Activated CD8-positive, alpha-beta T cell treated with anti-CD3 and anti-CD28 coated beads for 36 hours (primary cell): ENCODE measurements at regions of chr2 and their contacts with region 1.

Region 1: DNA sequence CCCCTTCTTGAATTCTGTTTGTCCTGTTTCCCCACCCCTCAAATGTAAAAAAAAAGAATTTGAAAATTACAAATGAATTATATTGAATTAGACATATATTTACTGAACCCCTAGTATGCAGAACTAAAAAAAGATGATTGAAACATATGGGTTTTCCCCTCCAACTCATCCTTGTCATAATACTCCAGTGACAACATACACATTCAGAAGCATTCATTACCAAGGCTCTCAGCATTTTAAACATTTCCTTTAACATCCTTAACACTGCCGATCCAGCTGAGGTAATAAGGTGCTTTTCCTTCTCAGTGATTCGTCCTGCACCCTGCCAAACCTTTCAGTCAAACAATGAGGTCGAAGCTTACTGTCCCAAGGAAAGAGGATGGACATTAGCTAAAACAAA is 53.1 kb upstream of the DTNB start:
- DNase-seq: no peak
- ATAC-seq: no peak
- H3K4me3 Mint-ChIP-seq: no peak overlapping the region
- H3K27ac Mint-ChIP-seq: no peak overlapping the region
- H3K4me1 Mint-ChIP-seq: peaks cover 2% of the 10 kb centered on the region
- H3K27me3 Mint-ChIP-seq: peaks cover 2% of the 10 kb centered on the region
- CTCF ChIP-seq: no peak

Region 2: GRCh38 chr2:25674077-25674362 is 52.5 kb before region 1 on chr2:
- CTCF ChIA-PET with region 1: no interaction called
- POLR2A ChIA-PET with region 1: no interaction called
- intact Hi-C with region 1: loop called (anchors 2 kb)
- DNase-seq: no peak
- ATAC-seq: no peak
- H3K4me3 Mint-ChIP-seq: peak overlapping the region; percentile 75
- H3K27ac Mint-ChIP-seq: peak overlapping the region; percentile 49
- H3K4me1 Mint-ChIP-seq: peaks cover 23% of the 10 kb centered on the region
- H3K27me3 Mint-ChIP-seq: peaks cover 8% of the 10 kb centered on the region
- CTCF ChIP-seq: no peak